IMR-90 (cell line): ENCODE measurements at regions of chr12 and their contacts with region 1.

Region 1: DNA sequence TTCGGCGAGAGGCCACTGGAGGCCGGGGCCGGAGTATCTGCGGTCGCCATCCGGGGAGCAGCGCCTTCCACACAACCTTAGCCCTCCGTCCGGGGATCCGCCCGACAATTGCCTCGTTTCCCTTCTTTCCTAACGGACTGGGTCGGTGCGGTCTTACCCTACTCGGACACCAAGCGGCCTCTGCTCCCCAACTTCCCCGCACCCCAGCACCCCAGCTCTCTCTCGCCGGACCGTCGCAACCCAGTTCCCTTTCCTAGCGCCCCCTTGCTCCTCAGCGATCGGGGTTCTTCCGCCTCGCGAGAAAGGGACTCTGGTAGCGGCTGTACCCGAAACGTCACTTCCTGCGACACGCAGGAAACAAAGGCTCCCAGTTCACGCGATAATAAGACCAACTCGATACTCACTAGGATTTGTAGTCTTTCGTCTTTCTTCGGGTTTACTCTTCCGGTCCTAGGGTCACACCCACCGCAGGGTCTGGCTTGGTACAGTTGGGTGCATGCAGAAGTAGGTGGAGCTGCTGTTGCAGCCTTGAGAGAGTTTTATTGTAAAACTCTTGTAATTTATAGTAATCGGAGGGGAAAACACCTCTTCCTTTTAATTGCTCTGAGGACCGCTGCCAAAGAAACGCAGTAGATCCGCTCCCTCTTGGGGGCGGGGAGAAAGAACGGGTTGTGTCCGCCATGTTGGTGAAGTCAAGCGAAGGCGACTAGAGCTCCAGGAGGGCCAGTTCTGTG is at the start of gene ZFC3H1:
- DNase-seq: peak; percentile 100
- ATAC-seq: peak; percentile 91
- H3K4me3 ChIP-seq: peak within 1 kb of the TSS; percentile 68
- H3K27ac ChIP-seq: peak within 1 kb of the TSS; percentile 95
- H3K4me1 ChIP-seq: no peaks in the 10 kb centered on the region
- H3K27me3 ChIP-seq: no peaks in the 10 kb centered on the region
- CTCF ChIP-seq: peak; percentile 43
- POLR2A ChIP-seq: peak; percentile 95
- RAD21 ChIP-seq: no peak
- total RNA-seq, gene ZFC3H1: 16.8 and 28.6 TPM in 2 replicates

Region 2: GRCh38 chr12:71685914-71686665 is 22.4 kb after region 1 on chr12 and contains the start of gene TMEM19:
- CTCF ChIA-PET with region 1: no interaction called
- POLR2A ChIA-PET with region 1: no interaction called
- dilution Hi-C with region 1: no loop called
- in situ Hi-C with region 1: no loop called
- intact Hi-C with region 1: loop called (anchors 1 kb)
- DNase-seq: peak; percentile 86
- ATAC-seq: peak; percentile 98
- H3K4me3 ChIP-seq: peak within 1 kb of the TSS; percentile 78
- H3K27ac ChIP-seq: peak within 1 kb of the TSS; percentile 81
- H3K4me1 ChIP-seq: peaks cover 1% of the 10 kb centered on the region; the same call in 1 of the 2 replicates
- H3K27me3 ChIP-seq: no peaks in the 10 kb centered on the region
- CTCF ChIP-seq: peak; percentile 42
- POLR2A ChIP-seq: peak; percentile 26; the same call in 1 of the 2 replicates
- RAD21 ChIP-seq: peak; percentile 48
- total RNA-seq, gene TMEM19: 28.7 and 43.9 TPM in 2 replicates

Region 3: DNA sequence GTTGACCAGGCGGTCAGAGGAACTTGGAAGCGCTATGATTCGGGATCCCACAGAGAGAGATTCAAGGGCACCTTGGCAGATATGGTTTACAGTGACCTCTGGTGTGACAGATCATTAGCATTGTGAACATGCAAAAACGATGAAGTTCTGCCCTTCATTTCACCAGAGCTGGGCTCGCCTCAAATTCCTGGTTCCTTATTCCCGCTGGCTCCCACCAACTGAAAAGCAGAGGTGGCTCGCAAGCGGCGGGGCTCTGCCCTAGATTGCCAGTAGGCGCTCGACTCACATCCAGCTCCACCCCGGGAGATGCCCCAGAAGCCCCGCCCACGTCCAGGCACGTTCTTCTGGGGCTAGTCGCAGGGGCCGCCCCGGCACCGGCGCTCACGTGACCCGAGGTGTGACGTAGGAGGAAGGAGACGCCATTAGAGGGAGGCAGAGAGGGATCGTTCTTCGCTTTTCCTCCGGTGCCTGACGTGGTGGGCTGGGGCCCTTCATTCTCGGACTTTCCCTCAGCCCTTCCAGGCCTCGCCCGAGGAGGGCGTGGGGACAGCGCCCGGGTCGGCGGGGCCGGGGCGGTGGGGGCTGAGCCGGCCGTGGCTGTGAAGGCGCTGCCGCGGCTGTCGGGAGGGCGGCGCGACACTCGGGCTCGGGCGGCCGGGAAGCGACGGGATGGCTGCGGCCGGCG is 90.9 kb after region 1 on chr12 and contains the start of gene RAB21:
- CTCF ChIA-PET with region 1: no interaction called
- POLR2A ChIA-PET with region 1: no interaction called
- dilution Hi-C with region 1: no loop called
- in situ Hi-C with region 1: loop called (anchors 10 kb)
- intact Hi-C with region 1: loop called (anchors 5 kb)
- DNase-seq: peak; percentile 95
- ATAC-seq: peak; percentile 97
- H3K4me3 ChIP-seq: peak within 1 kb of the TSS; percentile 84
- H3K27ac ChIP-seq: peak within 1 kb of the TSS; percentile 95
- H3K4me1 ChIP-seq: peaks cover 1% of the 10 kb centered on the region; the same call in 1 of the 2 replicates
- H3K27me3 ChIP-seq: peaks cover 13% of the 10 kb centered on the region
- CTCF ChIP-seq: peak; percentile 33
- POLR2A ChIP-seq: peak; percentile 92
- RAD21 ChIP-seq: no peak
- total RNA-seq, gene RAB21: 13.8 and 30.8 TPM in 2 replicates